OCI-LY7 (cell line): ENCODE measurements at regions of chr1 and their contacts with region 1.

Region 1: GRCh38 chr1:199151634-199152425 is 513.0 kb downstream of the PTPRC start:
- DNase-seq: no peak
- H3K4me3 ChIP-seq: no peak overlapping the region
- H3K27ac ChIP-seq: no peak overlapping the region
- H3K4me1 ChIP-seq: peaks cover 7% of the 10 kb centered on the region
- CTCF ChIP-seq: no peak

Region 2: DNA sequence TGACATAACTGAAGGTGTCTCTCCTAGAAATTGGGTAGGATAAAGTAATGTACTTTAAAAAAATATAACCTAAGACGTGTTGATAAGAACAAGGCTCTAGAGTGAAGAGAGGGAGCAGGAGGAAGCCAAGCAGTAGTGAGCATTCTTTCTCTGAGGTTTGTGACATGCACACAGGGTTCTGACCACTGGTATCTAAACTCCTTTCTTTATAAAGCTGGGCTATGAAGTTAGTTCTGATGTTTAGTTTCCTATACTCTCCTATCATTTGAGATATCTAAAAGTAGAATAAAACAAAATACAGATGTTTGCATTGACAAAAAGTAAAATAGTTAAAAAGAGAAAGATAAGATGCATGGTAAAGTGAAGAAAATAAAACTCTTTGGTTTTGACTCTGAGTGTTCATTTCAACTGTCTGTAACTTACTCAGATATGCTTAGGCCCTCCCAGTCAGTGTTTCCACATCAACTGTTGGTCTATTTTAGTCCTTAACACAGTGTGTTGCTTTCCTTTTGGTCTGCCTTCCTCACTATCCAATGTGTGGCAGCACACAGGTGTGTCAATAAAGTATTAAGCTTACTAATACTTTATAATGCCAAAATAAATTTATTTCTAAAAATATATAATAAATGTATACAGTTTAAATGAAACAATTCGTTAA is 30.5 kb after region 1 on chr1:
- CTCF ChIA-PET with region 1: no interaction called
- POLR2A ChIA-PET with region 1: no interaction called
- intact Hi-C with region 1: loop called (anchors 5 kb)
- DNase-seq: no peak
- H3K4me3 ChIP-seq: no peak overlapping the region
- H3K27ac ChIP-seq: no peak overlapping the region
- H3K4me1 ChIP-seq: no peaks in the 10 kb centered on the region
- CTCF ChIP-seq: no peak